ENCODE measurements at regions of chr12 and their contacts with region 1.

Region 1: DNA sequence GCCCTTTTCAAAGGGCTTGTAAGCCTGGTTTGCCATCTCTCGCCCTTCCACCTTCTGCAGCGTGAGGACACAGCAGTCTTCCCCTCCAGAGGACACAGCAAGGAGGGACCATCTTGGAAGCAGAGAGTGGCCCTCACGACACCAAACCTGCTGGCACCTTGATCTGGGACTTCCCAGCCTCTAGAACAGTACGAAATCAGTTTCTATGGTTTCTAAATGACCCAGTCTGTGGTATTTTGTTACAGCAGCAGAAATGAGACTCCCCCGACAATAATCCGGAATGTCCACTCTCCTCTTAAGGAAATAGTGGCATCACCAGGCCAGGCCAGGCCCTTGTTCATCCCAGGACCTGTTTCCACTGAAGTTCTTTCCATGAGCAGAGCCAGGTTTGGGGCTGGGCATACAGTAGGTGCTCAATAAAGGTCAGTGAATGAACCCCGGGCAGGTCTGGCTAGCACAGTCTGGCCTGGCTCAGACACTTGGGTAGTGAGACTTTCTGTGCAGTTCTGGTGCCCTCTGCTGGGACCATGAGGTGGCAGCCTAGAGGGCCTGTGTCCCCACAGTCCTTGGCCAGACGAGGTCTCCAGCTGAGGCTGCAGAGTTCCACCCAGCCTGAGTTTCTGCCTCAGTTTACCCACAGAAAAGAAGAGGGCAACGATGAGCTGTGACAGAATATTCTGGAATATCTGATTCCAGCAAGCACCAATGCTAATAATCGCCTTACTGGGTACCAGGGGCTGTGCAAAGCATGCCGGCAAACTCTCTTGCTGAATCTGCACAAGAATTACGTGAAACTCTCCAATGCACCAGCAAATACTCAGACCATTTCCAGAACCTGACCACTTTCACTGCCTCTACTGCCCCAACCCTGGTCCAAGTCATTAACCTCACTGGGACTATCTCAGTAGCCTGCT is 14.0 kb downstream of the ABCB9 start:
- DNase-seq: peak; percentile 85
- ATAC-seq: peak; percentile 99
- H3K4me3 Mint-ChIP-seq: no peak overlapping the region
- H3K27ac Mint-ChIP-seq: no peak overlapping the region
- H3K4me1 Mint-ChIP-seq: peaks cover 13% of the 10 kb centered on the region
- H3K27me3 Mint-ChIP-seq: peaks cover 2% of the 10 kb centered on the region
- CTCF ChIP-seq: peak; percentile 96

Region 2: DNA sequence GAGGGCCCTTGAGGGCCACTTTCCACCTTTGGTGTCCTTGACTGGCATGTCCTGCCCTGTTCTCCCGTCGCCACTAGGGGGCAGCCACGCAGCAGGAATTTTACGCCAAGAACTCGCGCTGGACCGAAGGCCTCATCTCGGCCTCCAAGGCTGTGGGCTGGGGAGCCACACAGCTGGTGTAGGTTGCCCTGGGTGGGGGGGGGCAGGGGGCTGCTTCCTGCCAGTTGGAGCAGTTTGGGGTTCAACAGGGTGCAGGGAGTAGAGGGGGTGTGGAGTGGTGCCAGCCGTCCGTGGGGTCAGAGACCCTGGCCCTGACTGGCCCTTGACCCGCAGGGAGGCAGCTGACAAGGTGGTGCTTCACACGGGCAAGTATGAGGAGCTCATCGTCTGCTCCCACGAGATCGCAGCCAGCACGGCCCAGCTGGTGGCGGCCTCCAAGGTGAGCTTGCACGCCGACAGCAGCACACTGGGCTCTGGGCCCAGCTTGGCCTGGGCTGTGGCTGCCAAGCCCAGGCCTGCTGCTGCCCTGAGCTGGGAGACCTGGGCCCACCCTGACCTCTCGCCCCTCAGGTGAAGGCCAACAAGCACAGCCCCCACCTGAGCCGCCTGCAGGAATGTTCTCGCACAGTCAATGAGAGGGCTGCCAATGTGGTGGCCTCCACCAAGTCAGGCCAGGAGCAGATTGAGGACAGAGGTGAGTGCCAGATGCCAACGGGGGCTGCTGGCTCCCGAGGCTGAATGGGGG is 91.7 kb before region 1 on chr12:
- CTCF ChIA-PET with region 1: interaction called, 87 read pairs
- POLR2A ChIA-PET with region 1: interaction called, 5 read pairs
- intact Hi-C with region 1: loop called (anchors 2 kb)
- DNase-seq: peak; percentile 88
- ATAC-seq: peak; percentile 83
- H3K4me3 Mint-ChIP-seq: no peak overlapping the region
- H3K27ac Mint-ChIP-seq: no peak overlapping the region
- H3K4me1 Mint-ChIP-seq: no peaks in the 10 kb centered on the region
- H3K27me3 Mint-ChIP-seq: no peaks in the 10 kb centered on the region
- CTCF ChIP-seq: peak; percentile 91

Region 3: GRCh38 chr12:122865268-122866231 is 86.7 kb before region 1 on chr12:
- CTCF ChIA-PET with region 1: interaction called, 87 read pairs
- POLR2A ChIA-PET with region 1: interaction called, 5 read pairs
- intact Hi-C with region 1: loop called (anchors 2 kb)
- DNase-seq: peak; percentile 40
- ATAC-seq: peak; percentile 52
- H3K4me3 Mint-ChIP-seq: no peak overlapping the region
- H3K27ac Mint-ChIP-seq: no peak overlapping the region
- H3K4me1 Mint-ChIP-seq: no peaks in the 10 kb centered on the region
- H3K27me3 Mint-ChIP-seq: no peaks in the 10 kb centered on the region
- CTCF ChIP-seq: peak; percentile 27

Region 4: DNA sequence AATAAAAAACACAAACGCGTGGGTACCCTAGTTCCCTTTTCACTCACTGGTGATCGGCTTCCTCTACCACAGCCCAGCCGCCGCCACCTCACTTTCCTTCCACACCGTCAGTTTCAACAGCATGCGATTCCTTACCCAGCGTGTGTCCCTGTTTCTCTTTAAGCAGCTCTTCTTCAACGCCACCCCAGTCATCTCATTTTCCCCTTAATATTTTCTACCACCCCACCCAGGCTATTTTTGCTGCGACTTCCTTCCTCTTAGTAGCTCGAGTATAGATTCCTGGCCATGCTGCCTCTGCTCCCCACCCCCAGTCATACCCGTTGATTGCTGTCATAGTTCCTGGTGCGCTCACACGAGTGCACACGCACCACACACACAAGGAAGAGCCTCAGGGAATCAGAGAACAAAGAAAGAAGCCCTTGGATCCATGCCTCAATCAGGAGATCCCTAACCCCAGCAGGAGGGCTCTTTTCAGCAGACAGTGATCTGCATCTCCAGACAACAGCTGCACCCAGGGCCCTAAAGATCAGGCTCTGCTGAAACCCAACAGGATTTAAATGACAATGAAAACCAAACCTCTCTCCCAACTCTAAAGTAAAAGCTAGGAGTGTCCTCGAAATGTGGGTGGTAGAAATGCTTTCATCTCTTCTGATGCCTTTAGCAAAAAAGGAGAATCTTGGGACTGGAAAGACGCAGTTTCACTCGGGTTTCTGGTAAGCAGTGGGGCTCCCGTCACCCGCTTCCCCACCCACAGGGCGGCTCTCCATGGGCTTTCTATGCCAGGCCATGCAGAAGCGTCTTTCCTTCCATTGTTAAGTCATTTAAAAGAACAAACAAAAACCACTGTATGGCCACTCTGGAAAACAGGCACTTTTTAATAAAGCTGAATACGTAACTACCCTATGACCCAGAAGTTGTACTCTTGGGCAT is 80.1 kb before region 1 on chr12:
- CTCF ChIA-PET with region 1: interaction called, 23 read pairs
- POLR2A ChIA-PET with region 1: no interaction called
- intact Hi-C with region 1: no loop called
- DNase-seq: peak; percentile 86
- ATAC-seq: peak; percentile 57
- H3K4me3 Mint-ChIP-seq: peak overlapping the region; percentile 47
- H3K27ac Mint-ChIP-seq: peak overlapping the region; percentile 51
- H3K4me1 Mint-ChIP-seq: peaks cover 59% of the 10 kb centered on the region
- H3K27me3 Mint-ChIP-seq: peaks cover 2% of the 10 kb centered on the region
- CTCF ChIP-seq: no peak

Region 5: GRCh38 chr12:122880668-122881067 is 71.6 kb before region 1 on chr12:
- CTCF ChIA-PET with region 1: interaction called, 16 read pairs
- POLR2A ChIA-PET with region 1: interaction called, 7 read pairs
- intact Hi-C with region 1: no loop called
- DNase-seq: peak; percentile 51
- ATAC-seq: peak; percentile 51
- H3K4me3 Mint-ChIP-seq: no peak overlapping the region
- H3K27ac Mint-ChIP-seq: no peak overlapping the region
- H3K4me1 Mint-ChIP-seq: peaks cover 91% of the 10 kb centered on the region
- H3K27me3 Mint-ChIP-seq: peaks cover 10% of the 10 kb centered on the region
- CTCF ChIP-seq: peak; percentile 52

Region 6: GRCh38 chr12:122965851-122966722 is 13.9 kb after region 1 on chr12 and contains the start of gene ABCB9:
- CTCF ChIA-PET with region 1: interaction called, 13 read pairs
- POLR2A ChIA-PET with region 1: interaction called, 3 read pairs
- intact Hi-C with region 1: no loop called
- DNase-seq: peak; percentile 97
- ATAC-seq: peak; percentile 99
- H3K4me3 Mint-ChIP-seq: peak within 1 kb of the TSS; percentile 56
- H3K27ac Mint-ChIP-seq: no peak within 1 kb of the TSS
- H3K4me1 Mint-ChIP-seq: peaks cover 3% of the 10 kb centered on the region
- H3K27me3 Mint-ChIP-seq: no peaks in the 10 kb centered on the region
- CTCF ChIP-seq: no peak
- total RNA-seq, gene ABCB9: 4.3 to 4.9 TPM

Region 7: GRCh38 chr12:123094349-123095074 is 142.3 kb after region 1 on chr12:
- CTCF ChIA-PET with region 1: no interaction called
- POLR2A ChIA-PET with region 1: no interaction called
- intact Hi-C with region 1: no loop called
- DNase-seq: no peak
- ATAC-seq: no peak
- H3K4me3 Mint-ChIP-seq: no peak overlapping the region
- H3K27ac Mint-ChIP-seq: no peak overlapping the region
- H3K4me1 Mint-ChIP-seq: peaks cover 7% of the 10 kb centered on the region
- H3K27me3 Mint-ChIP-seq: no peaks in the 10 kb centered on the region
- CTCF ChIP-seq: no peak